ENCODE measurements at regions of chr1 and their contacts with region 1.

Region 1: DNA sequence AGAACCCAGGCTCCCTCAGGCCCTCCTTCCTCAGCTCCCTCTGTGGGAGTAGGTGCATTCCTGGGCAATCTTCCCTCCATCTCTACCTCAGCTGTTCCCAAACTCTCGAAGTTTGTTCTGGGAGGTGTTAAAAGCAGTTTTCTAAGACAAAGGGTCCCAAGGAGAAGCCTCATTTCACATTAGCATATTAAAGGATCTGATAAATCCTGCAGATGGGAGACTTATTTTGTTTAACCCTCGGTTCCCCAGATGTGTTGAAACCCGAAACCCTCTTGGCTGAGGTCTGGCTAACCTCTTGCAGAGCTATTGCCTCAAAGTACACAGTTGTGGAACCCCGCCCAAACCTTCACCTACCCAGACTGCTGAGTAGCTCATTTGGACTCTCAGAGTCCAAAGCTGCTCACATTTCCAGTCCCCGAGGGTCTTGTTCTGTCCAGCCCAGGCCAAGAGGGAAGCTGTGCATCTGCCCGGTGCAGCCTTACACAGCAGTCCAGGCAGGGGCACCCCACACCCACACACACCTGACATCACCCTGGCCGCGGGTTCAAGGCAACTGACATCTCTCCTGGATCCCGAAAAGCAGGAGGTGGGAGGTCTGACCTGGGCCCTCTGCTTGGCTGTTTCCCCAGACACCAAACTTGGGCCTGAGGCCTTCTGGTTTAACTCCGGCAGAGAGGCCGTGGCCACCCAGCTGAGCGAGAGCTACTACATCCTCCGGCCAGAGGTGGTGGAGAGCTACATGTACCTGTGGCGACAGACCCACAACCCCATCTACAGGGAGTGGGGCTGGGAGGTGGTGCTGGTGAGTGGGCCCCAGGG is 19.5 kb upstream of the SELENON start:
- DNase-seq: peak; percentile 50
- ATAC-seq: peak; percentile 84
- H3K4me3 Mint-ChIP-seq: no peak overlapping the region
- H3K27ac Mint-ChIP-seq: peak overlapping the region; percentile 72
- H3K4me1 Mint-ChIP-seq: peaks cover 62% of the 10 kb centered on the region
- H3K27me3 Mint-ChIP-seq: peaks cover 5% of the 10 kb centered on the region; the same call in 1 of the 2 replicates
- CTCF ChIP-seq: no peak

Region 2: GRCh38 chr1:25590096-25590824 is 190.3 kb before region 1 on chr1:
- CTCF ChIA-PET with region 1: no interaction called
- POLR2A ChIA-PET with region 1: no interaction called
- DNase-seq: no peak
- ATAC-seq: 0 out of 2 replicates have a peak, but pooled peaks have one; percentile 10
- H3K4me3 Mint-ChIP-seq: no peak overlapping the region
- H3K27ac Mint-ChIP-seq: peak overlapping the region; percentile 37; the same call in 1 of the 2 replicates
- H3K4me1 Mint-ChIP-seq: peaks cover 43% of the 10 kb centered on the region
- H3K27me3 Mint-ChIP-seq: no peaks in the 10 kb centered on the region
- CTCF ChIP-seq: no peak

Region 3: GRCh38 chr1:25676488-25676887 is 104.0 kb before region 1 on chr1:
- CTCF ChIA-PET with region 1: no interaction called
- POLR2A ChIA-PET with region 1: no interaction called
- DNase-seq: no peak
- ATAC-seq: no peak; the same call in 1 of the 2 replicates
- H3K4me3 Mint-ChIP-seq: no peak overlapping the region
- H3K27ac Mint-ChIP-seq: 0 out of 2 replicates have a peak overlapping the region, but pooled peaks have one; percentile 43
- H3K4me1 Mint-ChIP-seq: peaks cover 26% of the 10 kb centered on the region
- H3K27me3 Mint-ChIP-seq: no peaks in the 10 kb centered on the region; the same call in 1 of the 2 replicates
- CTCF ChIP-seq: no peak

Region 4: DNA sequence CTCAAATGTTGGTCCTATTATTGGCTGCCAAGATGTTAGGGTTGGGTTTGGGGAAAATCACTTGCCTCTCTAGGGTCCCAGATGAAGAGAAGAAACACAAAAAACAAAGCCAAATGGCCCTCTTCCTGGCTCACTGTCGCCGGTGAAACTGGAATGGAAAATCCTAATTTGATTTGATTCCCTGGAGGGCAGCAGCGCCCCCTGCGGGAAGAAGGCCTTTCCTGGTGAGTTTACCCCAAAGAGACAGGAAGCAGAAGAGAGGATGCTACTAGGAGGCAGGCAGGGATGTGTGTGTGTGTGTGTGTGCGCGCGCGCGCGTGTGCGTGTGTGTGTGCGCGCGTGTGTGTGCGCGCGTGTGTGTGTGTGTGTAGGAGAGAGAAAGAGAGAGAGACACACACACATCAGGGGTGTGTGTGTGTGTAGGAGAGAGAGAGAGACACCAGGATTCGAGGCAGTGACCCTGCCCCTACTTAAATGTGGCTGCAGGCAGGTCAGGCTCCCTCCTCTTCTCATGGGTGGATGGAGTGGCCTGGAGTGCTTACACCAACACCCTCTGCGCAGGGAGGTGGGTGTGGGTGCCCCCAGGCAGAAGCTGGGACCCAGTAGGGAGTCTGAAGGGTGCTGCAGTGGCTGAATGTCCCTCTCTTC is 16.4 kb after region 1 on chr1:
- CTCF ChIA-PET with region 1: interaction called, 22 read pairs
- POLR2A ChIA-PET with region 1: interaction called, 4 read pairs
- DNase-seq: peak; percentile 95
- ATAC-seq: peak; percentile 27
- H3K4me3 Mint-ChIP-seq: no peak overlapping the region; the same call in 1 of the 2 replicates
- H3K27ac Mint-ChIP-seq: peak overlapping the region; percentile 29; the same call in 1 of the 2 replicates
- H3K4me1 Mint-ChIP-seq: peaks cover 30% of the 10 kb centered on the region
- H3K27me3 Mint-ChIP-seq: peaks cover 4% of the 10 kb centered on the region
- CTCF ChIP-seq: peak; percentile 77

Region 5: DNA sequence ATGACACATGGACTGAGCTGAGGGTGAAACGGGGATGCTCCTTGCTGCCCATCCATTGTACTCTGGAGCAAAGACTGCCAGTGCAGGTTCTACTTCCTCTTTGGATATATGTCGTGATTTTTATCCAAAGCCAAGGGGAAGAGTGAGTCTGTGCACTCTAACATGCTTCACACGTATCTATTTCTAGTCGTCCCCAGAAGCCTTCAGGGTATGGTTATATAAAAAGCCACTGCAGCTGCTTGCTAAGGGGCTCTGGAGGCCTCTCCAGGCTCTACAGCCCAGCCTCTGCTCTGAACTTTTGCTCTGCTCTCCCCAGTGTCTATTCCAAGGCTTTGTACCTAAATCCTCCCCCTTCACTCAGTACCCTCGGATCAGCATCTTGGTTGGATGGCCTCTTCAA is 197.3 kb after region 1 on chr1:
- CTCF ChIA-PET with region 1: no interaction called
- POLR2A ChIA-PET with region 1: no interaction called
- DNase-seq: no peak
- ATAC-seq: no peak
- H3K4me3 Mint-ChIP-seq: no peak overlapping the region
- H3K27ac Mint-ChIP-seq: no peak overlapping the region
- H3K4me1 Mint-ChIP-seq: no peaks in the 10 kb centered on the region
- H3K27me3 Mint-ChIP-seq: no peaks in the 10 kb centered on the region
- CTCF ChIP-seq: no peak

Measured in WTC11 (cell line).